ENCODE measurements at regions of chr17 and their contacts with region 1.

Region 1: GRCh38 chr17:57929386-57929785 is 25.8 kb downstream of the CUEDC1 start:
- DNase-seq: no peak
- H3K4me3 ChIP-seq: no peak overlapping the region
- H3K27ac ChIP-seq: no peak overlapping the region
- H3K4me1 ChIP-seq: peaks cover 46% of the 10 kb centered on the region
- H3K27me3 ChIP-seq: no peaks in the 10 kb centered on the region
- CTCF ChIP-seq: no peak

Region 2: GRCh38 chr17:57677301-57678257 is 251.8 kb before region 1 on chr17:
- CTCF ChIA-PET with region 1: no interaction called
- POLR2A ChIA-PET with region 1: no interaction called
- intact Hi-C with region 1: no loop called
- DNase-seq: no peak
- H3K4me3 ChIP-seq: no peak overlapping the region
- H3K27ac ChIP-seq: no peak overlapping the region
- H3K4me1 ChIP-seq: no peaks in the 10 kb centered on the region
- H3K27me3 ChIP-seq: no peaks in the 10 kb centered on the region
- CTCF ChIP-seq: no peak

Region 3: DNA sequence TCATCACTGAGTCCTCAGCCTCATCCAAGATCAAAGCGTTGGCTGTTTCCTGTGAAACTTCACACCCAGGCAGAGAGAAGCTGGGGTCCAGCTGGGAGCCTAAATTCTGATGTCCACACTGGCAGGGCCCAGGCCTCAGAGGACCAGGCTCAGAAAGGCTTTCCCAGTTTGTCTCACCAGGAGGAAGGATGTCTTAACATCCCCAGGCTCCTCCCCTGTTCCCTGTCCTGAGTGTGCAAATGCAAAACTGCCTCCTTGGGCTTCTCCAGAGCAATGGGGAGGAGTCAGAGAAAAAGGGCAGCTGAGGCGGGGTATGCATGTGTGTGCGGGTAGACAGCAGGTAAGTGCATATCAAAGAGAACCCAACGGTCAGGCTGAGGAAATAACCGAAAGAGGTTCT is 19.8 kb before region 1 on chr17:
- CTCF ChIA-PET with region 1: no interaction called
- POLR2A ChIA-PET with region 1: interaction called, 7 read pairs
- intact Hi-C with region 1: loop called (anchors 2 kb)
- DNase-seq: no peak
- H3K4me3 ChIP-seq: no peak overlapping the region
- H3K27ac ChIP-seq: no peak overlapping the region
- H3K4me1 ChIP-seq: peaks cover 22% of the 10 kb centered on the region
- H3K27me3 ChIP-seq: no peaks in the 10 kb centered on the region
- CTCF ChIP-seq: no peak

Region 4: DNA sequence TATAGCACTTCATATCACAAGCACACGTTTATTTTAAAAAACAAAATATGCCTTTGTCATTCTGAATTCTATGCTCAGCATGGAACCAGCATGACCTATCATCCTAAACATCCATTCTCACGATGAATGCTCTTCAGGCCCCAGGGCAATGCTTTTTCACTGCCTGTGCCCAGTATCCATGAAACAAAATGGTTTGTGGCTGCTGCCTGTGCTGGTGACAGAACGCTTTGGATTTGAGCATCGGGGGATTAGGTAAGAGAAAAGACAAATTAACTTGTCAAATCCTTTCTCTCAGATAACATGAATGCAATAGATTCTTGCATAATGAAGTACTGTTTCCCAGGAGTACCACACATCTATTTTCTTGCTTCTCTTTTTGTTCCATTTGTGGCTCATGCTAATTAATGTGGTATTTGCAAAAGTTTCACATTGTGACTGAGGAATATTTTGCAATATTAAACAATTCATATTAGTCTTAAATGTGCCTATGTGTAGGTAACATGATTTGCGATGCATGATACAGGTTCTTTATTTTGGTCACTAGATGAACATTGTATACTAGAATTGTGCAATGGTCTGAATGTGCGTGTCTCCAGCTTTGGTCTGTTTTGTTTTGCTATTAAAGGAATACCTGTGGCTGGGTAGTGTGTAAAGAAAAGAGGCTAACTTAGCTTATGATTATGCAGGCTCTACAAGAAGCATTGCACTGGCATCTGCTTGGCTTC is 103.5 kb after region 1 on chr17:
- CTCF ChIA-PET with region 1: no interaction called
- POLR2A ChIA-PET with region 1: no interaction called
- intact Hi-C with region 1: no loop called
- DNase-seq: no peak
- H3K4me3 ChIP-seq: no peak overlapping the region
- H3K27ac ChIP-seq: no peak overlapping the region
- H3K4me1 ChIP-seq: no peaks in the 10 kb centered on the region
- H3K27me3 ChIP-seq: peaks cover 4% of the 10 kb centered on the region
- CTCF ChIP-seq: no peak

Measured in A673 (cell line).